SK-N-SH (cell line): ENCODE measurements at regions of chr3 and their contacts with region 1.

Region 1: DNA sequence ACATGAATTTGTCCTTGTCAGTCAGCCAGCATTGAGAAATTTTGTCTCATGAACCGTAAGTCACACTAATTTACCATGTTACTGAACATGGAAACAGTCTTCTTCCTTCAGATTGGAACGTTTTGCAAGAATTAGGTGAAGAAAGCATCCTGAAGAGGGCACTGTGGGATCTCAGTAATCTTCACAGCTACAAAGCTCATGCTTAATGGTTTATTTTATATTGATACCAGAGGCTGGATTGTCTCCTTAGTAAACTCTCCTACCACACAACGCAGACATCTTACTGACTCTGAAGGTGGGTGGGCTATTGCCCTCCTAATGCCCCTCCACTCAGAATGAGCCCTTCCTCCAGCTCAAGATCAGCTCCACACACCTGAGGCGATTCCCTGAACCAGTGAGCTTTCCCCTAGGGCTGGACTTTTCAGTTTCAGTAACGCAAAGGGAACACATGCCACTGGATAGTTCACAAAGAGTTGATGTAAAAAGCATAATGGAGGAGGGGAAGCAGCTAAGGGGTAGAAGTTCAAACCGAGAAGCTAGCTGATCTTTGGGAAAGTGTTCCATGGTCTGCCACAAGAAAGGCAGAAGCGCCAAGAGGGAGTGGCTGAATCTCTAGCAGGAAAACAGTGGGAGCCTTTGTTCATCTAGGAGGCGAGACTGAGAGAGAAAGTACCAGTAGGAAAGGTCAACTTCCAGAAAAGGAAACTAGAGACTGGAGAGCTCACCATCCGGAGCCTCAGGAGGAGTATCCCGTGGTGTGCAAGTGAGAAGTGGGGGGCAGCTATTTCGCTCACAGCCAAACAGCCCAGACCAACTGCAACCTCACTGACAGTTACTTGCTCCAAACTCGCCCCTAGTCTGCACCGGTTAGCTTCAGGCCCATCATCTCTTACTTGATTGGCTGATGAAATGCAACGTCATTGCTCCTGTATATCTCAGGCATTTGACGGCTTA is at the start of gene SLC9C1:
- DNase-seq: peak; percentile 54
- H3K4me3 ChIP-seq: no peak within 1 kb of the TSS; a peak in 1 of 4 replicates
- H3K27ac ChIP-seq: no peak within 1 kb of the TSS
- H3K4me1 ChIP-seq: peaks cover 0 to 5% of the 10 kb centered on the region in 2 experiments; a peak in 1 of 4 replicates
- H3K27me3 ChIP-seq: no peaks in the 10 kb centered on the region
- CTCF ChIP-seq: peak; percentile 70
- EP300 ChIP-seq: no peak
- RAD21 ChIP-seq: peak; percentile 91
- polyA plus RNA-seq, gene SLC9C1: not detected in 2 replicates

Region 2: DNA sequence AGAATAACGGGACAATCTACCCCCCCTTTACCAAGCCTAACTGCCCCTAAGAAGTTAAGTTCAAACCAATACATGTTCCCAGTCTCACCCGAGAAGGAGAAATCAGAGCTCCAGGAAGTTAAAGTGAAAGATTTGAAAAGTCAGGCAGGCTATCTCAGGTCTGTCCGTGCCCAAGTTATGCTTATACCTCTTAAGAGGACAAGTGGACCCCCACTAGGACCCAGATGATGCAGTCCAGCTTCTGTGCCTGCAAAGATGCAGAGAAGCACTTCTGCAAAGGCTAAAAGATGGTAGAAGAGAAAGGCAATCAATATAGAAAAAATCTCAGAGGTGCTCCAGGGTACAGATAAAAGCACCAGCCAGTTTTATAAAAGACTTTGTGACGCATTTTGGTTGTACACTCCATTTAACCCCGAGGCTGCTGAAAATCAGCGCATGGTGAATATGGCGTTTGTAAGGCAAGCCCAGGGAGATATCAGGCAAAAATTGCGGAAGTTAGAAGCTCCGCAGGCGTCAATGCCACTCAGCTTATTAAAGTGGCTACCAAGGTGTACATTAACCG is 10.2 kb after region 1 on chr3:
- CTCF ChIA-PET with region 1: interaction called, 28 read pairs
- POLR2A ChIA-PET with region 1: no interaction called
- DNase-seq: no peak
- H3K4me3 ChIP-seq: peak overlapping the region; percentile 44 to 49
- H3K27ac ChIP-seq: peak overlapping the region in 1 of 2 experiments; percentile 72; a peak in 2 of 4 replicates
- H3K4me1 ChIP-seq: peaks cover 0 to 36% of the 10 kb centered on the region in 2 experiments; a peak in 2 of 4 replicates
- H3K27me3 ChIP-seq: no peaks in the 10 kb centered on the region
- CTCF ChIP-seq: no peak
- EP300 ChIP-seq: no peak
- RAD21 ChIP-seq: no peak

Region 3: DNA sequence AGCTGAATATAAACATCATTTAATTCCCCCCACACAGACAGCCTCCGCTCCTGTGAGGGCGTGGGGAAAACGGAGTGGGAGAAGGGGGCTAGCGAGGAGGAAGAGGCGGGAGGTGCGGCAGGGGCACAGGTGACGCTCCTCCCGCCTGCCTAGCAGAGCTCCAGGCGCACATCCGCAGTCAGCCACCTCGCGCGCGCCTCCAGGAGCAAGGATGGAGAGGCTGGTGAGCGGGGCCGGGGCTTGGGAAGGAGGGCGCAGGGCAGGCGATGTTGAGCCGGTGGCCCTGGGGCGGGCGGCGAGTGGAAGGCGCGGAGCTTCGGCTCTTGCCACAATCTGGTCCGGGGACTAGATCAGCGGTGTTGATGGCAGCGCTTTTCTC is 39.3 kb after region 1 on chr3 and contains the start of gene CD200:
- CTCF ChIA-PET with region 1: interaction called, 32 read pairs
- POLR2A ChIA-PET with region 1: interaction called, 12 read pairs
- DNase-seq: peak; percentile 79
- H3K4me3 ChIP-seq: peak within 1 kb of the TSS; percentile 57 to 74
- H3K27ac ChIP-seq: peak within 1 kb of the TSS; percentile 27 to 92; a peak in 3 of 4 replicates
- H3K4me1 ChIP-seq: peaks cover 0 to 2% of the 10 kb centered on the region in 2 experiments; a peak in 2 of 4 replicates
- H3K27me3 ChIP-seq: no peaks in the 10 kb centered on the region; the same call in 1 of the 2 replicates
- CTCF ChIP-seq: 0 out of 2 replicates have a peak, but pooled peaks have one; percentile 8
- EP300 ChIP-seq: no peak
- RAD21 ChIP-seq: no peak
- polyA plus RNA-seq, gene CD200: 1.0 and 1.1 TPM in 2 replicates

Region 4: GRCh38 chr3:112416391-112417212 is 123.0 kb after region 1 on chr3:
- CTCF ChIA-PET with region 1: no interaction called
- POLR2A ChIA-PET with region 1: no interaction called
- DNase-seq: no peak
- H3K4me3 ChIP-seq: no peak overlapping the region
- H3K27ac ChIP-seq: no peak overlapping the region
- H3K4me1 ChIP-seq: no peaks in the 10 kb centered on the region
- H3K27me3 ChIP-seq: no peaks in the 10 kb centered on the region
- CTCF ChIP-seq: no peak
- EP300 ChIP-seq: no peak
- RAD21 ChIP-seq: no peak

Region 5: GRCh38 chr3:112519424-112520001 is 225.9 kb after region 1 on chr3:
- CTCF ChIA-PET with region 1: interaction called, 89 read pairs
- POLR2A ChIA-PET with region 1: no interaction called
- DNase-seq: peak; percentile 40
- H3K4me3 ChIP-seq: no peak overlapping the region
- H3K27ac ChIP-seq: no peak overlapping the region
- H3K4me1 ChIP-seq: no peaks in the 10 kb centered on the region
- H3K27me3 ChIP-seq: no peaks in the 10 kb centered on the region
- CTCF ChIP-seq: peak; percentile 83
- EP300 ChIP-seq: no peak
- RAD21 ChIP-seq: peak; percentile 84

Region 6: DNA sequence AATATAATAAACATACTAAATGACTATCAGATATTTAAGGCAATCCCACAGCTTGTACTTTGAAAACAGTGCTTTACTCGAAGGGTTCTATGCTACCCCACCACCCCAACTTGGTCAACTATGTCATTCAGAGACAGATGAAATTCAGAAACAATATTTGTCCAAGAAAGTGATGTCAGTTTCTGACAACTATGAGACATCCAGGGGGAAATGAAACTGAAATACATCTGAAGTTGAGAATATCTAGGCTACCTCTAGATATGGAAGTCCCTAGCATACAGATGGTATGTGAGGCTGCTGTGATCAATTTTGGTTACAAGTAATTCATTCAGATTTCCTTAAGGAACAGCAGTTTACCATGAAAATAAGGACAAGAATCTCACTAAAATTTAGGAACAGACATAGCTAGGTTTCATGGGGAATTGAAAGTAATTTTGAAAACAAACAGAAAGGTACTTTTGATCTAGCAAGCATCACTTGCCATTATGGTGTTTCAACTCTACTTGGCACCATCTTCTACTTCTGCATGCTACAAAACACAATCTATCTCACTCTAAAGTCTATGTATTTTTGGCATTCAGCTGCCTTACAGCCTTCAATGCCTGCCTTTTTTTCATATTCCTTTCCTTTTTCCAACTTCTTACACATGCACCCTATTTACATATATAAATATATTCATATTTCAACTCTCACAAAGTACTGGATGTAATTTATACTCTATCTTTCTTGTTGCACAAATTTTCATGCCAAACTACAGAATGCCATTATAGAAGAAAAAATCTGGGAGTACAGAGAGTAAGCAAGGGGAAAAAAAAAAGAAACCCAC is 246.4 kb after region 1 on chr3:
- CTCF ChIA-PET with region 1: interaction called, 24 read pairs
- POLR2A ChIA-PET with region 1: no interaction called
- DNase-seq: no peak
- H3K4me3 ChIP-seq: no peak overlapping the region
- H3K27ac ChIP-seq: no peak overlapping the region
- H3K4me1 ChIP-seq: no peaks in the 10 kb centered on the region
- H3K27me3 ChIP-seq: no peaks in the 10 kb centered on the region
- CTCF ChIP-seq: no peak
- EP300 ChIP-seq: no peak
- RAD21 ChIP-seq: no peak

Region 7: DNA sequence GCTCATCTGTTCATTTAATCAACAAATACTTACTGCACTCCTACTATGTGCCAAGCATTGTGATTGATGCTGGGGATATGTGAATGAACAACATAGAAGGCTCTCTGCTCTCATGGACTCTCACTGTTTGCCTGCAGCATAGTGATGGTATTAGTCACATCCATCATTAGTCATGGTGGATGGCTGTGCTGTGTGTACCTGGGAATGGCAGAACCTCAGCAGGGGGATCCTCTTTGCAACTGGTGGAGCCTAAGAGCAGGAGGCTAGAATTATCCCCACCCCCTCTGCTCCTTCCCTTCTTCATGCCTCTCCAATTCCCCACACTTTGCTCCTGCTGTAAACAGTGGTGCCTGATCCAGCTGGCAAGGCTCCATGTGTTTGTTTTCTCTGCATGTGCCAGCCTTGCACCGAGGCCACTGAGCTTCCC is 938.2 kb after region 1 on chr3:
- CTCF ChIA-PET with region 1: no interaction called
- POLR2A ChIA-PET with region 1: no interaction called
- DNase-seq: no peak
- H3K4me3 ChIP-seq: no peak overlapping the region
- H3K27ac ChIP-seq: peak overlapping the region; percentile 34 to 70; a peak in 3 of 4 replicates
- H3K4me1 ChIP-seq: peaks cover 0 to 33% of the 10 kb centered on the region in 2 experiments; a peak in 1 of 4 replicates
- H3K27me3 ChIP-seq: no peaks in the 10 kb centered on the region
- CTCF ChIP-seq: no peak
- EP300 ChIP-seq: 0 out of 4 replicates have a peak, but pooled peaks of 1 of the 2 experiments have one; percentile 9
- RAD21 ChIP-seq: no peak